Left ventricle myocardium inferior (tissue), 1 donor: ENCODE measurements at regions of chr11 and their contacts with region 1.

Region 1: GRCh38 chr11:3775736-3776406 is 21.5 kb downstream of the NUP98 start:
- DNase-seq: no peak
- H3K4me3 ChIP-seq: no peak overlapping the region
- H3K27ac ChIP-seq: no peak overlapping the region
- H3K4me1 ChIP-seq: peaks cover 8% of the 10 kb centered on the region
- H3K27me3 ChIP-seq: no peaks in the 10 kb centered on the region
- CTCF ChIP-seq: no peak

Region 2: GRCh38 chr11:3723014-3723708 is 52.7 kb before region 1 on chr11:
- intact Hi-C with region 1: loop called (anchors 10 kb)
- DNase-seq: no peak
- H3K4me3 ChIP-seq: no peak overlapping the region
- H3K27ac ChIP-seq: no peak overlapping the region
- H3K4me1 ChIP-seq: no peaks in the 10 kb centered on the region
- H3K27me3 ChIP-seq: no peaks in the 10 kb centered on the region
- CTCF ChIP-seq: no peak